Activated CD4-positive, alpha-beta T cell treated with anti-CD3 and anti-CD28 coated beads, Interleukin-2, amount 10 ng/mL, durations not matched to agents 24 days and 14 days (primary cell): ENCODE measurements at regions of chr5 and their contacts with region 1.

Region 1: DNA sequence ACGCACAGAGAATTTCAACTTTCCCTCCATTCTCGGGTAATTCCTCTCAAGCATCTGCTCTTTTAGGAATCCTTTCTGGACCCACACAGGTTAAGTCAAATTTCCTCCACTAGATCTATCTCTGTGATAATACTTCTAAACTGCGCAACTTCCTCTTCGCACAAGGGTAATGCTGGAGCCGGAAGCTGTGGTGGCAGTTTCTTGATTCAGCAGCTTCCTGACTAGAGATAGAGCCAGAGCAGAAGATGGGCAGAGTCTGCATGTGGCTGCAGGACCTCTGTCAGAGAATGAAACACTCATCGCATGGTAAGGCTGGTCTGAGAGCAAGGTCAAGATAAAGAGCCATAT is 11.1 kb upstream of the CDC42SE2 start:
- DNase-seq: peak; percentile 94
- H3K4me3 Mint-ChIP-seq: peak overlapping the region; percentile 85
- H3K27ac Mint-ChIP-seq: peak overlapping the region; percentile 96
- H3K4me1 Mint-ChIP-seq: peaks cover 55% of the 10 kb centered on the region
- H3K27me3 Mint-ChIP-seq: no peaks in the 10 kb centered on the region

Region 2: DNA sequence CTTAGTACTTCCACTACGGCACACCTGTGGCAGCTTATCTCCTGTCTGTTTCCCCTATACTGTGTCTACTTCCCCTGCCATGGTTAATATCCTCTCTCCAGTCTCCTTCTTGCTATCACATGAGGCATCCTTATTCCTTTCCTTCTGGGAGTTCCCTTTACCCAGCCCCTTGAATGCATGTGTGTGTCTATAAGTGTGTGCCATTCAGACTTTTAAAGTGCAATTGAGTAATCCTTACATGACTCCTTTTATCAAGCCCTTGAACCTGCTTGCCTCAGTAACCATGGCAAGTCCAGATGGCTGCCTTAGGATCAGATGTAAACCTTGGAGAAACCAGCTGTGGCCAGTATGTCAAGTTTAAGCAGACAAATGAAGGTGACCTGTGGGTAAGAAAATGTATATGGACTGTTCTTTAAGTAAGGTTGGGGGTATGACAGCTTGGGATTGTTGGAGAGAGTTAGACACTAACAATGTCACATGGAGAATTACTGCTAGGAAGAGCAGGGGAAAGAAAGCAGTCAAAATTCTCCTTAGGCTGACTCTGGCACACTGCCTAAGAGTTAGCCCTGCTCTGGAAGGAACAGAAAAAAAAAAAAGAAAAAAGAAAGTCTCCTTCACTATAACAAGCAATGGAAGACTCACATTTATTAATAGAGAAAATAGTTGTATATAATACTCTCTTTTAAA is 229.8 kb before region 1 on chr5:
- intact Hi-C with region 1: no loop called
- DNase-seq: no peak
- H3K4me3 Mint-ChIP-seq: no peak overlapping the region
- H3K27ac Mint-ChIP-seq: no peak overlapping the region
- H3K4me1 Mint-ChIP-seq: no peaks in the 10 kb centered on the region
- H3K27me3 Mint-ChIP-seq: no peaks in the 10 kb centered on the region

Region 3: DNA sequence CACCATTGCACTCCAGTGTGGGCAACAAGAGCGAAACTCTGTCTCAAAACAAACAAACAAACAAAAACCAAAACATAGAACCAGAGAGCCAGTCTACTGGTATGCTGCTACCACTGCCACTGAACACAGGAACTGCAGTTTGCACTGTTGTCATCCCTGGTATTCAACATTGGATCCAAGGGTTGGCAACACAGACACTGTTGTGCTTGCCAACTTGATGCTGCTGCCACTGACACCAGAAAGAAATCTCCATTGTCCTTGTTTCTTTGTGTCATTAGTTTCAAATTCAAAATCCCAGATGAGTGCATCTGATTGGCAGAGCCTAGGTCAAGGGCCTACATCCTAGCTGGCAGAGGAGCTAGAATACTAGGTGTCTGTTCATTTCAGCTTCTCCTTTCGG is 104.0 kb before region 1 on chr5:
- intact Hi-C with region 1: no loop called
- DNase-seq: no peak
- H3K4me3 Mint-ChIP-seq: no peak overlapping the region
- H3K27ac Mint-ChIP-seq: no peak overlapping the region
- H3K4me1 Mint-ChIP-seq: no peaks in the 10 kb centered on the region
- H3K27me3 Mint-ChIP-seq: peaks cover 4% of the 10 kb centered on the region

Region 4: GRCh38 chr5:131170540-131171275 is 82.1 kb before region 1 on chr5 and contains the start of gene LYRM7:
- intact Hi-C with region 1: loop called (anchors 1 kb)
- DNase-seq: peak; percentile 99
- H3K4me3 Mint-ChIP-seq: peak within 1 kb of the TSS; percentile 100
- H3K27ac Mint-ChIP-seq: peak within 1 kb of the TSS; percentile 97
- H3K4me1 Mint-ChIP-seq: peaks cover 45% of the 10 kb centered on the region
- H3K27me3 Mint-ChIP-seq: no peaks in the 10 kb centered on the region
- total RNA-seq, gene LYRM7: 17.9 and 18.1 TPM in 2 replicates

Region 5: DNA sequence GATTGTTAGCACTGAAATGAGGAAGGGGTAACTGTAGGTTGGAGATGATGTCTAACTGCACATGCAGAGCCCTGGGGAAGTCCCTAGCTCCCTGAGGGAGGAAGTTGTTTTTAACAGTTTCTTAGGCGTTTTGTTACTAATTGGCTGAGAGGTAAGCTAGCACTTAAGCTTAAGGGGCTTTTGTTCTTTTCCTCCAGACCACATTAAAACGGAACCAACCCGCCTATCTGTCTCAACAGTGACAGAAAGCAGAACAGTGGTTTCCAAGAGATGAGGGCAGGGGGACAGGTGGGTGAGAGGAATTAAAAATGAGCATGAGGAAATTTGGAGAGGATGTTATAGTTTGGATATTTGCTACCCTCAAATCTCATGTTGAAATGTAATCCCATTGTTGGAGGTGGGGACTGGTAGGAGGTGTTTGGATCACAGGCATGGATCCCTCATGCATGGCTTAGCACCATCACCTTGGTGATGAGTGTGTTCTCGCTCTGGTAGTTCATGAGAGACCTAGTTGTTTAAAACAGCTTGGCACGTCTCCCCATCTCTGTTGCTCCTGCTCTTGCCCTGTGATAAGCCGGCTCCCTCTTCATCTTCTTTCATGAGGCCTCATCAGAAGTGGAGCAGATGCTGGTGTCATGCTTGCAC is 43.2 kb before region 1 on chr5:
- intact Hi-C with region 1: loop called (anchors 1 kb)
- DNase-seq: peak; percentile 87
- H3K4me3 Mint-ChIP-seq: peak overlapping the region; percentile 82
- H3K27ac Mint-ChIP-seq: peak overlapping the region; percentile 94
- H3K4me1 Mint-ChIP-seq: peaks cover 47% of the 10 kb centered on the region
- H3K27me3 Mint-ChIP-seq: no peaks in the 10 kb centered on the region

Region 6: GRCh38 chr5:131224387-131225201 is 28.2 kb before region 1 on chr5:
- intact Hi-C with region 1: loop called (anchors 2 kb)
- DNase-seq: peak; percentile 59
- H3K4me3 Mint-ChIP-seq: no peak overlapping the region
- H3K27ac Mint-ChIP-seq: no peak overlapping the region
- H3K4me1 Mint-ChIP-seq: peaks cover 5% of the 10 kb centered on the region
- H3K27me3 Mint-ChIP-seq: no peaks in the 10 kb centered on the region

Region 7: DNA sequence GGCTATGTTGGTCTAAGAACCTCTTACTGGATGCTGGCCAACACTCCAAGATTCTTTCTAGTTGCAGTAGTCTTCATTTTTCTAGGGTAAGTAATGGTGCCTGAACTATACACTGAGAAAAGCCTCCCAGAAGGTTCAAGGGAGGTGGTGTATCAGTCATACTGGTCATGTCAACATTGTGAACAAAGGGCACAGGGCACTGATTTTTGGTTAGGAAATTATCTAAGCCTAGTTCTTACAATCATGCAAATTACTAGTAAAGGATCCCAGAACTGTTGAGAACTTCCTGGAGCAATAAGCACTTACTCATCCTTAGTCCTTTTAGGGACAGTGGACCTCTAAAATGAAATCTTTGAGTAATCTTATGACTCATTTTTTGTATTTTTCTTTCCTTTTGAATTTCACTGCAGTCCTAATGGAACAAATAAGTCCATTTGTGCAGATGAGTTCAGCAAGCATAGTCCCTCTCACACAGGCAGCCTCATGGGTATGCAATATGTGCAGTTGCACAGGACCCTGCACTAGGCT is 10.0 kb before region 1 on chr5:
- intact Hi-C with region 1: loop called (anchors 1 kb)
- DNase-seq: no peak
- H3K4me3 Mint-ChIP-seq: no peak overlapping the region
- H3K27ac Mint-ChIP-seq: no peak overlapping the region
- H3K4me1 Mint-ChIP-seq: peaks cover 7% of the 10 kb centered on the region
- H3K27me3 Mint-ChIP-seq: no peaks in the 10 kb centered on the region

Region 8: DNA sequence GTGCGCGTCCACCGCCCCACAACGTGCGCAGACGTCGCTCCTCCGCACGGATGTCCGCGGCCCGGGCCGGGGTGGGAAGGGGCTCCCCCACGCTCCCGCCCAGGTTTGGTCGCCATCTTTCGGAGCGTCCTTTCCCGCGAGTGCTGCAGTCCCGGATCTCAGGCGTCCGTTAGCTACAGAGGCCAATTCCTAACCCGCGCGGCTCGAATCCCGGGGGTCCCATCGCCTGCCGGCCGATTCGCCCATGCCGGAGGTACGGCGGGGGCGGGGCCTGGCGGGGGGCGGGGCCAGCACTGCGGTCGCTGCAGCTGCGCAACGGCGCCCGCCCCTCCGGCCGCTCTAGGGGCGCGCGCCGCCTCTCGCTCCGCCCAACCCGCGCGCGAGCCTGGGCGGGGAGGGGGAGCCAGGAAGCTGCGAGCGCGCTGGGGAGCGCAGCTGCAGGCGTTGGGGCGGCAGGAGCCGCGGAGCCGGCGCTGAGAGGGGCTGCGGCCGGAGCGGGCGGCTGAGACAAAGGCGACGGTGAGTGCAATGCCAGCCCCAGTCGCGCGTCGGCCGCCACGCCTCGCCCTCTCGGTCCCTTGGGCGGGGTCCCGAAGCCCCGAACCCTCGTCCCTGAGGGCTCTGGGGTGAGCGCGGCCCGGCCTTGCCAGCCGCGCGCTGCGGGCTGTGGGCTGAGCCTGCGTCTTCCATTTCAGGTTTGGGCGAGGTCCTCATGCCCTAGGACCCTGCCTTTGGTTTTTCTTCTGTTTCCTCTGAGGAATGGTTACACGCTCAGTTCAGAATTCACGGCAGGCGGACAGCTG is 11.1 kb after region 1 on chr5 and contains the start of gene CDC42SE2:
- intact Hi-C with region 1: loop called (anchors 1 kb)
- DNase-seq: peak; percentile 97
- H3K4me3 Mint-ChIP-seq: peak within 1 kb of the TSS; percentile 85
- H3K27ac Mint-ChIP-seq: peak within 1 kb of the TSS; percentile 93
- H3K4me1 Mint-ChIP-seq: peaks cover 34% of the 10 kb centered on the region
- H3K27me3 Mint-ChIP-seq: no peaks in the 10 kb centered on the region
- total RNA-seq, gene CDC42SE2: 96.2 and 99.0 TPM in 2 replicates